ENCODE measurements at regions of chr16 and their contacts with region 1.

Region 1: GRCh38 chr16:22190776-22191531 is 15.1 kb upstream of the EEF2K start:
- DNase-seq: peak; percentile 94 to 100
- H3K4me3 ChIP-seq: peak overlapping the region; percentile 77
- H3K27ac ChIP-seq: peak overlapping the region; percentile 59
- H3K4me1 ChIP-seq: peaks cover 19% of the 10 kb centered on the region
- H3K27me3 ChIP-seq: no peaks in the 10 kb centered on the region
- CTCF ChIP-seq: no peak

Region 2: GRCh38 chr16:21158208-21159110 is 1032.5 kb before region 1 on chr16 and contains the start of gene LDAF1:
- CTCF ChIA-PET with region 1: no interaction called
- POLR2A ChIA-PET with region 1: no interaction called
- intact Hi-C with region 1: loop called (anchors 2 kb)
- DNase-seq: peak; percentile 66 to 89
- H3K4me3 ChIP-seq: peak within 1 kb of the TSS; percentile 87
- H3K27ac ChIP-seq: peak within 1 kb of the TSS; percentile 74
- H3K4me1 ChIP-seq: peaks cover 16% of the 10 kb centered on the region
- H3K27me3 ChIP-seq: no peaks in the 10 kb centered on the region
- CTCF ChIP-seq: no peak
- total RNA-seq, gene LDAF1: 47.6 and 69.9 TPM in 2 replicates

Region 3: GRCh38 chr16:21708533-21709115 is 482.3 kb before region 1 on chr16:
- CTCF ChIA-PET with region 1: interaction called, 3 read pairs
- POLR2A ChIA-PET with region 1: no interaction called
- intact Hi-C with region 1: loop called (anchors 5 kb)
- DNase-seq: peak; percentile 61 to 70
- H3K4me3 ChIP-seq: no peak overlapping the region
- H3K27ac ChIP-seq: no peak overlapping the region
- H3K4me1 ChIP-seq: no peaks in the 10 kb centered on the region
- H3K27me3 ChIP-seq: no peaks in the 10 kb centered on the region
- CTCF ChIP-seq: peak; percentile 87

Region 4: GRCh38 chr16:22077700-22078313 is 113.1 kb before region 1 on chr16:
- CTCF ChIA-PET with region 1: interaction called, 31 read pairs
- POLR2A ChIA-PET with region 1: no interaction called
- intact Hi-C with region 1: loop called (anchors 1 kb)
- DNase-seq: peak; percentile 36 to 67
- H3K4me3 ChIP-seq: no peak overlapping the region
- H3K27ac ChIP-seq: no peak overlapping the region
- H3K4me1 ChIP-seq: no peaks in the 10 kb centered on the region
- H3K27me3 ChIP-seq: no peaks in the 10 kb centered on the region
- CTCF ChIP-seq: peak; percentile 93

Region 5: GRCh38 chr16:22206013-22206841 is 15.3 kb after region 1 on chr16 and contains the start of gene EEF2K:
- CTCF ChIA-PET with region 1: interaction called, 7 read pairs
- POLR2A ChIA-PET with region 1: interaction called, 3 read pairs
- intact Hi-C with region 1: loop called (anchors 1 kb)
- DNase-seq: peak; percentile 88 to 97
- H3K4me3 ChIP-seq: peak within 1 kb of the TSS; percentile 74
- H3K27ac ChIP-seq: peak within 1 kb of the TSS; percentile 73
- H3K4me1 ChIP-seq: peaks cover 25% of the 10 kb centered on the region
- H3K27me3 ChIP-seq: no peaks in the 10 kb centered on the region
- CTCF ChIP-seq: peak; percentile 68
- total RNA-seq, gene EEF2K: 29.8 and 34.7 TPM in 2 replicates

Region 6: GRCh38 chr16:22374311-22375116 is 183.6 kb after region 1 on chr16 and contains the start of gene CDR2:
- CTCF ChIA-PET with region 1: no interaction called
- POLR2A ChIA-PET with region 1: no interaction called
- intact Hi-C with region 1: loop called (anchors 1 kb)
- DNase-seq: peak; percentile 91 to 99
- H3K4me3 ChIP-seq: peak within 1 kb of the TSS; percentile 95
- H3K27ac ChIP-seq: peak within 1 kb of the TSS; percentile 45; the same call in 1 of the 2 replicates
- H3K4me1 ChIP-seq: peaks cover 39% of the 10 kb centered on the region
- H3K27me3 ChIP-seq: no peaks in the 10 kb centered on the region
- CTCF ChIP-seq: no peak
- total RNA-seq, gene CDR2: 29.3 and 34.0 TPM in 2 replicates

Region 7: DNA sequence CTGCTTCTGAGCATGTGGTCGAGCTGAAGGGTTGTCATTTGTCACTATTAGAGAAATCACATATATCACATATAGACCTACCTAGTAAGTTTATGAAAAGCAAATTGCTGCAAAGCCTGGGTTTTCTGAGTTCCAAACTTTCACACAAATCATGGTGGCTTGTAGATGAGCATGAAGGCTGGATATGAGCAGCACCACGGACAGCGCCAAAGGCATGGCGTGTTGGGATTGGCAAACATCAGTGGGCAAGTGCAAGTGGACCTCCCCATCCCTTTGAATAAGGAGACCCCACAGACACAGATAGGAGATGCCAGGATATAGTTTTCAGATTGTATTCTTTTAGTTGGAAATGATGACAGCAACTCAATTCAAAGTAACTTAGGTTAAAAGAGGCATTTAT is 1987.5 kb after region 1 on chr16:
- CTCF ChIA-PET with region 1: no interaction called
- POLR2A ChIA-PET with region 1: no interaction called
- intact Hi-C with region 1: no loop called
- DNase-seq: no peak
- H3K4me3 ChIP-seq: no peak overlapping the region
- H3K27ac ChIP-seq: no peak overlapping the region
- H3K4me1 ChIP-seq: no peaks in the 10 kb centered on the region
- H3K27me3 ChIP-seq: peaks cover 17% of the 10 kb centered on the region
- CTCF ChIP-seq: no peak